Right ventricle myocardium inferior (tissue), 1 donor: ENCODE measurements at regions of chr14 and their contacts with region 1.

Region 1: DNA sequence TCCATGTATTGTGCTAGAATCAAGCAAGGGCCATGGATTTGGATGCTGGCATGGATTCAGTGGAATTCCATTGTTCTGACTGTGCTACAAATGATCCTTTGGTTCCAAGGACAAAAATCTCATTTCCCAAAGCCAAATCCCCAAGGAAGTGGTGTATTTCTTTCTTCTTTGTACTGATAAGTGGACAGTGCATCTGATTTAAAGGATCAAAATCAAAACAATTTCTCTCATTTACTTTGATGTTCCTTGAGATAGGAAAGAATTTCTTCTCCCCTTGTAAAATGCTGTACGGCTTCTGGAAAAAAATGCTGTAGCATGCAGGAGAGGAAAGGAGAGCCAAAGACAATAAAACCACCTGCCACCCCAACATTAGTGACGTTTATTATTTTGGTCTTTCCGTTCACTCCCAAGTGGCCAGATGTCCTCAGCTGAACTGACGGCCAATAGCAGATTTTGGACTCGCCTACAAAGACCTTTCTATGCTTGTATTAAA is 185.7 kb downstream of the PRKD1 start:
- DNase-seq: no peak
- ATAC-seq: peak; percentile 65

Region 2: DNA sequence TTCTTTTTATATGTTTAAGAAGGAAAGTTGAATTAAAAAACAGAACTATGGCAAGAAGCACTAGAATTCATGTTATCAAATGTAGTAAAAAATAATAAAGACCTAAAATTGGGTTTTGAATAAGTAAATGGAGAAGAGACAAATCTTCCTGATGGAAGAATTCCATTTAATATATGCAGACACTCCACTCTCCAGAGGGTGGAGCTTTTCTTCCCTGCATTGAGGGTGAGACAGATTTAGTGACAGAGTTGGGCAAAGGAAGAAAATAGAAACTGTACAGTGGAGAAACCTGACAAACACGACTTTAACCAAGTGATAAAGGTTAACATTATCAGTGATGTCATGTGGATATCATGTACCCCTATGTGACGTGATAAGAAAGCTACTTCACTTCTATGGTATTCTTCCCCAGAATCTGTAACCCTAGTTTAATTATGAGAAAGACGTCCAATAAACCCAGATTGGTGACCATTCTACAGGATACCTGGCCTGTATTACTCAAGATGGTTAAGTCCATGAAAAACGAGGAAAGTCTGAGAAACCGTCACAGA is 31.9 kb before region 1 on chr14:
- intact Hi-C with region 1: no loop called
- DNase-seq: no peak
- ATAC-seq: no peak

Region 3: GRCh38 chr14:29927376-29928116 is 185.6 kb after region 1 on chr14 and contains the start of gene PRKD1:
- intact Hi-C with region 1: loop called (anchors 5 kb)
- DNase-seq: peak; percentile 75
- ATAC-seq: peak; percentile 93
- total RNA-seq, gene PRKD1: 3.2 TPM